ENCODE measurements at regions of chr16 and their contacts with region 1.

Region 1: GRCh38 chr16:73082608-73083007 is 34.7 kb upstream of the ZFHX3 start:
- DNase-seq: peak; percentile 92
- H3K4me3 Mint-ChIP-seq: peak overlapping the region; percentile 23
- H3K27ac Mint-ChIP-seq: peak overlapping the region; percentile 96
- H3K4me1 Mint-ChIP-seq: no peaks in the 10 kb centered on the region
- H3K27me3 Mint-ChIP-seq: no peaks in the 10 kb centered on the region
- CTCF ChIP-seq: no peak

Region 2: DNA sequence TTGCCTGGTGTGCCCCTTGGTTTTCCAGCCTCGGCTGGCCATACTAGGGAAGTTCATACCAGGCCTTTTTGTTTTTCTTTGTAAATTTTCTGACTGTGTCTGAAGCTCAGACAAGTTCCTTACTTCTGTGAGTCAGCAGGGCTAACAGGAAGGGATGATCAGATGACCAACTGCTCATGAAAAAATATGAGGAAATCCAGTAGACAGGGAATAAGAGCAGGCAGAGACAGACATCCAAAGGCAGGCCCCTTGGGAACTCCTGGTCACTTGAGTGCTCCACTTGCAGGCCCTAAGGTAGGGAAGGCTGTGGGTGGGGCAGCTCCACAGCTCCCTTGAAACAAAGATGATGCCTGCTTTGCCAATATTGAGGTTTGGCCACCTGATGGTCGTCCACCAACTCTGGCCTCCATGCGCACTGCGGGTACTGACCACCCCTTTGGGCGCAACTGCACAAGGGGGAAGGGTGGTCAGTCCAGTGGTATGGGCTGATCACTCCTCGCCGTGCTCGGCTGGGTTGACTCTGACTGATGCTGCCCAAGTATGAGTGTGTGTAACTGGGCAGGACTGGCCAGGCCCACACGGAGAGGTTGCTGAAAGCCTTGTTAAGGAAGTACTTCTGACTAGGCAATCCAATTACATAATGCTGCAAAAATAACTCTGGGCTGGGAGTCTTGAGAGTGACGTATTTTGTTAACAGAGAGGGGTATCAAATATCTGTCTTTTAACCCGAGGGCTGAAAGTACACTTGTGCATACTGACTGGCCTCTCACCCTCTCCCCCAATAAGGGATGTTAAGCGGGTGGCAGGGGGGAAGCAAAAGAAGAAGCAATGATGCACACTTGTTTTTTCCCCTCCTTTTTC is 13.8 kb before region 1 on chr16:
- CTCF ChIA-PET with region 1: interaction called, 5 read pairs
- POLR2A ChIA-PET with region 1: interaction called, 56 read pairs
- intact Hi-C with region 1: no loop called
- DNase-seq: peak; percentile 86
- H3K4me3 Mint-ChIP-seq: no peak overlapping the region
- H3K27ac Mint-ChIP-seq: peak overlapping the region; percentile 96
- H3K4me1 Mint-ChIP-seq: peaks cover 36% of the 10 kb centered on the region
- H3K27me3 Mint-ChIP-seq: no peaks in the 10 kb centered on the region
- CTCF ChIP-seq: no peak

Region 3: GRCh38 chr16:73113336-73113735 is 30.7 kb after region 1 on chr16:
- CTCF ChIA-PET with region 1: interaction called, 3 read pairs
- POLR2A ChIA-PET with region 1: interaction called, 7 read pairs
- intact Hi-C with region 1: loop called (anchors 1 kb)
- DNase-seq: peak; percentile 87
- H3K4me3 Mint-ChIP-seq: no peak overlapping the region
- H3K27ac Mint-ChIP-seq: peak overlapping the region; percentile 100
- H3K4me1 Mint-ChIP-seq: peaks cover 17% of the 10 kb centered on the region
- H3K27me3 Mint-ChIP-seq: no peaks in the 10 kb centered on the region
- CTCF ChIP-seq: no peak

Region 4: GRCh38 chr16:73126525-73126853 is 43.9 kb after region 1 on chr16:
- CTCF ChIA-PET with region 1: interaction called, 3 read pairs
- POLR2A ChIA-PET with region 1: interaction called, 7 read pairs
- intact Hi-C with region 1: loop called (anchors 5 kb)
- DNase-seq: peak; percentile 93
- H3K4me3 Mint-ChIP-seq: no peak overlapping the region
- H3K27ac Mint-ChIP-seq: no peak overlapping the region
- H3K4me1 Mint-ChIP-seq: peaks cover 22% of the 10 kb centered on the region
- H3K27me3 Mint-ChIP-seq: no peaks in the 10 kb centered on the region
- CTCF ChIP-seq: no peak

Region 5: GRCh38 chr16:73172241-73172972 is 89.8 kb after region 1 on chr16:
- CTCF ChIA-PET with region 1: interaction called, 10 read pairs
- POLR2A ChIA-PET with region 1: interaction called, 6 read pairs
- intact Hi-C with region 1: no loop called
- DNase-seq: peak; percentile 87
- H3K4me3 Mint-ChIP-seq: no peak overlapping the region
- H3K27ac Mint-ChIP-seq: no peak overlapping the region
- H3K4me1 Mint-ChIP-seq: peaks cover 37% of the 10 kb centered on the region
- H3K27me3 Mint-ChIP-seq: no peaks in the 10 kb centered on the region
- CTCF ChIP-seq: peak; percentile 42